AG04450 (cell line): ENCODE measurements at regions of chr19 and their contacts with region 1.

Region 1: DNA sequence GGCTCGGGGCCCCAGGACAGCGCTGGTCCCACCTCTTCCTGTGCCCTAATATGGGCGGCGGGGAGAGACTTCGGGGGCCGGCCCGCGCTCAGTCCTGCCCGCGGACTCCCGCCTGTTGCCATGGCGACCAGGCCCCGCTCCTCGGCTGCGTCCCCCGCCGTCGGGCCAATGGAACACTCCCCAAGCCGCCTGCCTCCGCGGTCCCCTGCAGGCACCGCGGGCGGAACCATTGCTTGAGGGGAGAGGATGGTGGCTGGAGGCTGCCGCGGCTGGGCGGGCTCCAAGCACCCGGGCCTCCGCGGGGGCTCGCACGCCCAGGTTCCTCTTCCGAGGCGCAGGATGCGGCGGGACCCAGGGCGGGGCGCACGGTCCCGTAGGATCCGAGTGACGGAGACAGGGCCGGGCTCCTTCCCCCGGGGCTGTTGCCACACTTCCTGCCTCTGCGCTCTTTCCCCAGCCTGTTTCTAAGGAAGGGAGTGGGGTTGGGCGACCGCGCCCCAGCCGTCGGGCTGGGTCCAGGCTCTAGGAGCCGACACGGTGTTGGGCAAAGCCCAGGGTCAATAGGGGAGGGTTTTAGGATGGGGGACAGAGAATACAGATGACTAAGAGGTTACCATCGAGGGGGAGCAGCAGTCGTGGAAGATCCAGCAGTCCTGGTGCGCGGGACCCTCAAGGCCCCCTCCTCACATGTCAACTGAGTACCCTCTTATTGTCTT is 1.2 kb upstream of the JUNB start:
- DNase-seq: peak; percentile 92
- H3K4me3 ChIP-seq: peak overlapping the region; percentile 57
- H3K27ac ChIP-seq: peak overlapping the region; percentile 91
- H3K27me3 ChIP-seq: no peaks in the 10 kb centered on the region
- CTCF ChIP-seq: no peak

Region 2: GRCh38 chr19:12623361-12624022 is 166.6 kb before region 1 on chr19:
- CTCF ChIA-PET with region 1: no interaction called
- POLR2A ChIA-PET with region 1: no interaction called
- DNase-seq: no peak
- H3K4me3 ChIP-seq: no peak overlapping the region
- H3K27ac ChIP-seq: no peak overlapping the region
- H3K27me3 ChIP-seq: no peaks in the 10 kb centered on the region
- CTCF ChIP-seq: no peak

Region 3: DNA sequence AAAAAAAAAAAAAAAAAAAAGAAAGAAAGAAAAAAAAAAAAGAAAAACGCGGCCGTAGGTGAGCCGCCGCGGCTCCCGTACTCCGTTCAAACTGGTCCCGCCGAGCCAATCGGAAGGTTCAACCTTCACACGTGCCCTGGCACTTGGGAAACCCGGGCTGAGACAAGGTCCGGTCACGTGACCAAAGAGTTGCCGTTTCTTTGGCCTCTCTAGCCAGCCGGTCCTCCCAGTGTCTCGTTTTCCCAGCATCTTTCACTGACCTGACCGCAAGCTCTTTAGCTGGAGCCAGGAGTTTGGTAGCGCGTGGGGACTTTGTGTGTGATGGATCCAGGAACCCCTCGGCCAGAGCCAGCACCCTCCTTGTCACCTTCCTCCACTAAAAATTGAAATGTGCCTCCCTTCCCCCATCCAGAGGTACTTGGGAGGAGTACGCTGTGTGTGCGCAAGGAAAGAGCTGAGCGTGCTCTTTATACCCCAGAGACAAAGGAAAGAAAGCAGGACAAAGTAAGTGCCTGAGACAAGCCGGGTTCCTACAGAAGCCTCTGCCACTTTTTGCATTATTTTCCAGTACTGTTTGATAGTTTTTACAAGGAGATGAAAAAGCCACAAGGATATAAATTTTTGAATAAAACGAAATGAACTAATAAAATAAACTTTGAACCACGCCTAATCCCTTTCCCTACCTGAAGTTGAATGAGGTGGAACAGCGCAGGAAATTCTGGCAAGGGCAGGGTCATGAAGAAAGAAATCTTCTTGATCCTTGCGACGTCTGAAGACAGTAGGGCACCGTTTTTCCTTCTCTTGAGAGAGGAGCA is 67.3 kb before region 1 on chr19:
- CTCF ChIA-PET with region 1: no interaction called
- POLR2A ChIA-PET with region 1: interaction called, 25 read pairs
- DNase-seq: peak; percentile 98
- H3K4me3 ChIP-seq: peak overlapping the region; percentile 83
- H3K27ac ChIP-seq: peak overlapping the region; percentile 82
- H3K27me3 ChIP-seq: no peaks in the 10 kb centered on the region
- CTCF ChIP-seq: no peak

Region 4: DNA sequence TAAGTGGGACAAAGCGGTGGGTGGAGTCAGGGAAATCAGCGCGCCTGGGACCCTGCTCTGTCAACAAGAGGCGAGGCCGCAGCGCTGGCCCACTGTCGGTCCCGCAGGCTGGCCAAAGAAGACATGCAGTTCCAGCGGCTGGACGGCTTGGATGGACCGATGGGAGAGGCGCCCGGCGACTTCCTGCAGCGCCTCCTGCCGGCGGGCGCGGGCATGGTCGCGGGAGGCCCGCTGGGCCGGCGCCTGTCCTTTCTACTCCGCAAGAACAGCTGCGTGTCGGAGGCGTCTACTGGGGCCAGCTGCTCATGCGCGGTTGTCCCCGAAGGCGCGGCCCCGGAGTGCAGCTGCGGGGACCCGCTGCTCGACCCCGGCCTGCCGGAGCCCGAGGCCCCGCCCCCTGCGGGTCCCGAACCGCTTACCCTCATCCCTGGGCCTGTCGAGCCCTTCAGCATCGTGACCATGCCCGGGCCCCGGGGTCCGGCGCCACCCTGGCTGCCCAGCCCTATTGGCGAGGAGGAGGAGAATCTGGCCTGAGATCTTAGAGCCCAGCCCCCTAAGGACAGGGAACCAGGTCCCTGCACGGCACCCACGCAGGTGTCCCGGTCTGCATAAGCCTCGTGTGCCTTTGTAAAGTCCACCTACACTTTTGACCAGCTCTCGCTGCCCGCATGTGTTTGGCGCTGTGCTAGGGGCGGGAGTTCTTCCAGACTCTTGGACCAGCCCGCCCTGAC is 32.4 kb before region 1 on chr19:
- CTCF ChIA-PET with region 1: interaction called, 410 read pairs
- POLR2A ChIA-PET with region 1: interaction called, 10 read pairs
- DNase-seq: no peak
- H3K4me3 ChIP-seq: peak overlapping the region; percentile 53
- H3K27ac ChIP-seq: no peak overlapping the region
- H3K27me3 ChIP-seq: peaks cover 3% of the 10 kb centered on the region
- CTCF ChIP-seq: peak; percentile 76

Region 5: DNA sequence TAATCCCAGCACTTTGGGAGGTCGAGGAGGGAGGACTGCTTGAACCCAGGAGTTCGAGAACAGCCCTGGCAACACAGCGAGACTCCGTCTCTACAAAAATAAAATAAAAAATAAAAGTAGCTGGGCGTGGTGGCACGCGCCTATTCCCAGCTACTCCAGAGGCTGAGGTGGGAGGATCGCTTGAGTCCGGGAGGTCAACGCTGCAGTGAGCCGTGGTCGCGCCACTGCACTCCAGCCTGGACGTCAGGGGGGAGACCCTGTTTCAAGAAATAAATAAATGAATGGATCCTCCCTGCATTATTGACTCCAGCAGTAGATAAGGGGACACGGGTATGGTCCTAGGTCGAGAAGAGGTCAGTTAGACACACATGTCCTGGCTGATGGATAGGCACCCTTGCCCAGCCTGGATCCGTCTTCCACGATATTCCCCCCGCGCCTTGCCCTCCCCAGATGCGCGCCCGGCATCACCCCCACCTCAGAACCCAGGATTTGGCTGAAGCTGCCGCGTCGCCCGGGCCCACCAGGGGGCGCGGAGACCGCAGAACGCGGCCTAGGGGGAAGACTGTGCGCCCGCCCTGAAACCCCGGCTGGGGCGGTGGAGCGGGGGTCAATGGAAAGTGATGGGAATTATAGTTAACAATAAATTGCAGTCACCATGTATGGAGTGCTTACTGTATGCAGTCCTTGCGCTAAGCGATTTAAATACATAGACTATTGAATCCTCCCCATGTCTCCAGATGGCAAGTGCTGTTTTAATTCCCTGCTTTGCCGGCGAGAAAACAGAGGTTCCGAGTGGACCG is 12.6 kb before region 1 on chr19:
- CTCF ChIA-PET with region 1: interaction called, 92 read pairs
- POLR2A ChIA-PET with region 1: interaction called, 157 read pairs
- DNase-seq: no peak
- H3K4me3 ChIP-seq: peak overlapping the region; percentile 68
- H3K27ac ChIP-seq: peak overlapping the region; percentile 98
- H3K27me3 ChIP-seq: no peaks in the 10 kb centered on the region
- CTCF ChIP-seq: peak; percentile 88

Region 6: DNA sequence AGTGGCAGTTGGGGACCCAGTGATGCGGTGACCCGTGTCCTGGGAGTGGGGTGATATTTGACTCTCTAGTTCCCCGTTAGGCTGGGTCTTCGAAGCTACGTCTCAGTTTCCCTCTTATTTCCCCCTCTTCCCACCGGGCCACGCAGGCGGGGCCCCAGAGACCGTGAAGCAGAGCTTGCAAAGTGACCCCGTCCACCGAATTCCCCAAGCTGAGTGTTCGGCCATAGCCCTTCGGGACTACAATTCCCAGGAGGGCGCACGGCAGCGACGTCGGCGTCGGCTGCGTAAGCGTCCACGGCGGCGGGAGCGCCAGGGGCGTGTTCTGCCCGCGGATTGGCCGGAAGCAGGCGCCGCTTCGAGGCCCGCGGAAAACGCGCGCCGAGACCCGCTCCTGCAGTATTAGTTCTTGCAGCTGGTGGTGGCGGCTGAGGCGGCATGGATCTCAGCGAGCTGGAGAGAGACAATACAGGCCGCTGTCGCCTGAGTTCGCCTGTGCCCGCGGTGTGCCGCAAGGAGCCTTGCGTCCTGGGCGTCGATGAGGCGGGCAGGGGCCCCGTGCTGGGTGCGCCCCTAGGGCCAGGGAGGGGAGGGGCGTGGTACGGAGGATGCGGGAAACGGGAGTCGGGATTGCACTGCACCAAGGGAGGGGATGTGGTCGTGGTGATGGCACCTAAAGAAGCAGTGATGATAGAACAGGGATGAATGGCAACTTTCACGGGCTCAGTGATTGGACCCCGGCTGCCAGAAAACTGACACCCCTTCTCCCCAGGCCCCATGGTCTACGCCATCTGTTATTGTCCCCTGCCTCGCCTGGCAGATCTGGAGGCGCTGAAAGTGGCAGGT is 16.4 kb after region 1 on chr19 and contains the start of gene RNASEH2A:
- CTCF ChIA-PET with region 1: no interaction called
- POLR2A ChIA-PET with region 1: interaction called, 11 read pairs
- DNase-seq: peak; percentile 63
- H3K4me3 ChIP-seq: peak within 1 kb of the TSS; percentile 83
- H3K27ac ChIP-seq: no peak within 1 kb of the TSS
- H3K27me3 ChIP-seq: no peaks in the 10 kb centered on the region
- CTCF ChIP-seq: no peak
- polyA plus RNA-seq, gene RNASEH2A: 11.6 and 11.7 TPM in 2 replicates

Region 7: DNA sequence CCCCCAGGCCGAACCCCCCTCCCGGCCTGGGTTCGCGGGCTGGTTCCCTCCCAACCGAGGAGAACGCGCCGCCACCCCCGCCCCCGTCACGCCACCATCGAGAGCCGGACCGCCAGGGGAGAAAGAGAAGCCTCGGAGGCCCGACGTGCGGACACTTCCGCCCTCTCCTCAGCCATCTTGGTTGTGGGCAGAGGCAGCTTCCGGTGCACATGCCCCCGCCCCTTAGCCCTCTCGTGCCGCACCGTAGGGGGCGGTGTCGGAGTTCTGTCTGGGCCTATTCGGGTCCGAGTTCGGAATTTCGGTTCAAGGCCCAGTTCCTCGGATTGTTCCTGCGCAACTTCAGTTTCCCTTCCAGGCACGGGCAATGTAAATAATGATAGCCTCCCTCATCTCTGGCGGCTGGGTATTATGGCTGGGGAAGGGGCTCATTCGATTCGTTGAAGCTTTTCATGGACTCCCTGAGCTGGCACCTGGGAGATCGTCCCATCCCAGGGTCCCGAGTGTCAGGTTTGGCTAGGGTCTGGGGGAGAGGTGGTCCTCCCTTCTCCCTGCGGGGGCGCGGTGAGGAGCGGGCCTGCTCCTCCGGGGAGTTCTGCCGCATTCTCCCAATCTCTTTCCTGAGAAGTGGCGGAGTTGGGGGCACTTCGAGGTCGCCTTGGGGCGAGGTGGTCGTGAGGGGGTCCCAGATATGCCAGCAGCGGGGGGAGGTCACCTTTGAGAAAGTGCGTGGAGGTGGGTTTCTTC is 360.3 kb after region 1 on chr19 and contains the starts of genes IER2 and STX10:
- CTCF ChIA-PET with region 1: no interaction called
- POLR2A ChIA-PET with region 1: no interaction called
- DNase-seq: peak; percentile 86
- H3K4me3 ChIP-seq: peak within 1 kb of the TSS; percentile 87
- H3K27ac ChIP-seq: peak within 1 kb of the TSS; percentile 94
- H3K27me3 ChIP-seq: no peaks in the 10 kb centered on the region
- CTCF ChIP-seq: peak; percentile 67
- polyA plus RNA-seq, gene IER2: 15.3 and 21.3 TPM in 2 replicates
- polyA plus RNA-seq, gene STX10: 47.9 and 57.6 TPM in 2 replicates